ENCODE measurements at regions of chr1 and their contacts with region 1.

Region 1: GRCh38 chr1:201709564-201710295 is 119.2 kb upstream of the IPO9 start:
- DNase-seq: no peak
- H3K4me3 ChIP-seq: no peak overlapping the region
- CTCF ChIP-seq: peak; percentile 92

Region 2: GRCh38 chr1:201408176-201408833 is 301.4 kb before region 1 on chr1:
- CTCF ChIA-PET with region 1: no interaction called
- POLR2A ChIA-PET with region 1: no interaction called
- DNase-seq: peak; percentile 10
- H3K4me3 ChIP-seq: no peak overlapping the region
- CTCF ChIP-seq: peak; percentile 99

Region 3: GRCh38 chr1:201545851-201546492 is 163.8 kb before region 1 on chr1:
- CTCF ChIA-PET with region 1: interaction called, 15 read pairs
- POLR2A ChIA-PET with region 1: no interaction called
- DNase-seq: no peak
- H3K4me3 ChIP-seq: no peak overlapping the region
- CTCF ChIP-seq: no peak

Region 4: DNA sequence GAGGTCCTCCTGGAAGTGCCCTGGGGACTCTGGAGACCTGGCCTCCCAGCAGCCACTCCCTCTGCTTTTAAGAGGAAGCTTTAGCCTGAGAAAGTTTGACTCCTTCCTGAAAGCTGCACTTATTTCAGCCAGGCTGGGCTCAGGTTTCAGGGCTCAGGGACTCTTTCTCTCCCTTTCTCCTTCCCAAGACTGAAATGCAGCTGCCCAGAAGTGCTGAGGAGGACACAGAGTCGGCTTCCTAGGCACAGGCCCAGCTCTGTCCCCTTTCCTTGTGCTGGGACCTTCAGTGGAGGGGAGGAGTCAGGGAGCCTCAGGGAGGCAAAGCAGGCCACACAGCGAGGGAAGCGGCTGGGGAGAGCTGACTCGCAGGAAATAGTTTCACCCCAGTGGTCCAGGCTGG is 33.5 kb before region 1 on chr1:
- CTCF ChIA-PET with region 1: interaction called, 12 read pairs
- POLR2A ChIA-PET with region 1: no interaction called
- DNase-seq: no peak
- H3K4me3 ChIP-seq: no peak overlapping the region
- CTCF ChIP-seq: no peak

Region 5: GRCh38 chr1:201719812-201720521 is 10.2 kb after region 1 on chr1:
- CTCF ChIA-PET with region 1: interaction called, 51 read pairs
- POLR2A ChIA-PET with region 1: no interaction called
- DNase-seq: no peak
- H3K4me3 ChIP-seq: no peak overlapping the region
- CTCF ChIP-seq: no peak

Region 6: GRCh38 chr1:201748335-201748734 is 38.6 kb after region 1 on chr1:
- CTCF ChIA-PET with region 1: interaction called, 17 read pairs
- POLR2A ChIA-PET with region 1: interaction called, 6 read pairs
- DNase-seq: peak; percentile 95
- H3K4me3 ChIP-seq: no peak overlapping the region
- CTCF ChIP-seq: no peak

Region 7: GRCh38 chr1:201792534-201793305 is 83.0 kb after region 1 on chr1:
- CTCF ChIA-PET with region 1: interaction called, 785 read pairs
- POLR2A ChIA-PET with region 1: interaction called, 6 read pairs
- DNase-seq: peak; percentile 37
- H3K4me3 ChIP-seq: no peak overlapping the region
- CTCF ChIP-seq: peak; percentile 91

Region 8: DNA sequence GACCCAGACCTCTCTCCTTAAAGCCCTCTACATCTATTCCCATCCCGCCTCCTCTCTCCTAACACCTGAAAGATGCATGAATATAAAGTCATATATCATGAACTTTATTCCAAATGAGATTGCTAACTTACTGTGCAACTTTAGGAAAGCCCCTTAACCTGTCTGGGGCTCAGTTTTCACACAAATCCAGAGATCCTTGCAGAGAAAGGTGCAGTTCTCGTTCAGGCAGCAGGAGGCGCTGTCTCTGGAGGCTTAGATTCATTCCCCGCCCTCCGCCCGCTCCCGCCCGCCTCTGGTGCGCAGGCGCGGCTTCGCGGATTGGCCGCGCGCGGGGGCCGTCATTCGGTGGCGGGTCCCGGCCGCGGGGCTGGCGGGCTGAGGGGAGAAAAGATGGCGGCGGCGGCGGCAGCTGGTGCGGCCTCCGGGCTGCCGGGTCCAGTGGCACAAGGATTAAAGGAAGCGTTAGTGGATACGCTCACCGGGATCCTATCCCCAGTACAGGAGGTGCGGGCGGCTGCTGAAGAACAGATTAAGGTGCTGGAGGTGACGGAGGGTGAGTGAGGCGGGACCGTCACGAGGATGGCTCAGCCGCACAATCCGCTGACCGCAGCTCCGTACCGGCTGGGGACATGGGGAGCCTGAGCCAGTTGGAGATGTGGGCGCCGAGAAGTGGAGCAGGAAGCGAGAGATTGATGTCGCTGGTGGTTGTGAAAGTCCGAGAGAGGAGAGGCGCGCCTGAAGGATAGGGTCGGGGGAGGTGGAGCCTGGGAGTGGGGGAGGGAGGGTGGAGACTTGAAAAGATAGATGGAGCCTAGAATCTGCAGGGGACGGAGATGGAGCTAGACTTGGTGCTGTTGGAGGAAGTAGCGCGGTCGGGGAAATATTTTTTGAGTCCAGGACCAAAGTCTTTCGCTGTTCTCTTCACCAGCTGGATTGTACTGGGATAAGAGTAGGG is 119.4 kb after region 1 on chr1 and contains the start of gene IPO9:
- CTCF ChIA-PET with region 1: interaction called, 11 read pairs
- POLR2A ChIA-PET with region 1: no interaction called
- DNase-seq: no peak
- H3K4me3 ChIP-seq: peak within 1 kb of the TSS; percentile 100
- CTCF ChIP-seq: peak; percentile 89

Region 9: GRCh38 chr1:201859424-201859823 is 149.7 kb after region 1 on chr1:
- CTCF ChIA-PET with region 1: no interaction called
- POLR2A ChIA-PET with region 1: no interaction called
- DNase-seq: no peak
- H3K4me3 ChIP-seq: no peak overlapping the region
- CTCF ChIP-seq: no peak